HAP-1 (cell line): ENCODE measurements at regions of chr9 and their contacts with region 1.

Region 1: DNA sequence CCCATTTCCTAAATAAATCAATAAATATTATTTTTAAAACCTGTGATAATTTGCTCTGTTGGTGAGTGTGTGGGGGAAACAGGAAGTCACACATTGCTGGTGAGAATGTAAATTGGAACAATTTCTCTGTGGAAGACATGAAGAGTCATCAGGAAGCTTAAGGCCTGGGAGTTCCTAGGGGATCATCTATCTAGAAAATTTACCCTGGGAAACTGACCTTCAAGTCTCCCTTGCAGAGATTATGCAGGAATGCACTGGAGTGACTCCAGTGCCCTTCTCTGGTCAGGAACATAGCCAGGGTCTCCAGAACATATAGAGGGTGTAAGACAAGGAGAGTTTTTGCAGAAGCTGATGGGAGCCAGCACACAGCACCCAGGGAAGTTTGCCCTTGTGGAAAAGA is 13.0 kb upstream of the GCNT1 start:
- DNase-seq: no peak
- H3K4me3 ChIP-seq: no peak overlapping the region
- H3K4me1 ChIP-seq: 0 out of 2 replicates have a peak, but pooled peaks cover 2% of the 10 kb centered on the region
- H3K27me3 ChIP-seq: no peaks in the 10 kb centered on the region

Region 2: GRCh38 chr9:76353280-76353679 is 92.7 kb before region 1 on chr9:
- in situ Hi-C with region 1: no loop called
- DNase-seq: peak; percentile 16 to 29
- H3K4me3 ChIP-seq: no peak overlapping the region
- H3K4me1 ChIP-seq: no peaks in the 10 kb centered on the region
- H3K27me3 ChIP-seq: peaks cover 25% of the 10 kb centered on the region; the same call in 1 of the 2 replicates

Region 3: DNA sequence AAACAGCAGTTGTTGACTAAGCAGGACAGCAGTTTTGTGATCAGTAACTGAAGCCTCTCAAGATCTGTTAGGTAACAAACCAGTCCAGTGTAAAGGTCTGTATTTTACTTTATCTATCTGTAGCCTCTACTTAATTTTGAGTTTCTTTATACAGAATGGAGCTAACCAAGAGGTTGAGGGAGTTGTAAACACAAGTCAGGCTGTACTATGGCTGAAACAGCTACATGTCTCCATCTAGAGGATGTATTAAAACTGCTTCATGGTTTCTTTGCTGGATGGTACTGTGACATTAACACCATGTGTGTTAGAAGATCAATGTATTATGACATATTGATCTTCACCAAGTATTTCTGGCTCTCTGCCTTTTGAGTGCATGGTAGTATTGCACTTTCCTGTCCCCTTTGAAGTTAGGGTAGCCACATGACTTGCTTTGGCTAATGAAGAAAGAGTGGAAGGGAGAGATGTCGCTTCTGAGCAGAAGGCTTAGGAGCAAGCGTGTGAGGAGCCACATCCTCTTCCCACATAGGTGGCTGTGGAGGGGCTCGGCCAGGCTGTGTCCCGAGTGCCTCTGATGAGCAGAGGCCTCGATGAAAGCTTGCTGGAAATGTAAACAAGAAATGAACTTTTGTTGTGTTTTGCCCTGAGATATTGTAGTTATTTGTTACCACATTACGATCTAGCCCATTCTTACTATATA is 212.7 kb after region 1 on chr9:
- in situ Hi-C with region 1: loop called (anchors 5 kb)
- DNase-seq: peak in 1 of 2 experiments; percentile 42
- H3K4me3 ChIP-seq: no peak overlapping the region
- H3K4me1 ChIP-seq: no peaks in the 10 kb centered on the region
- H3K27me3 ChIP-seq: peaks cover 6% of the 10 kb centered on the region

Region 4: GRCh38 chr9:76704593-76705204 is 258.7 kb after region 1 on chr9:
- in situ Hi-C with region 1: loop called (anchors 5 kb)
- DNase-seq: peak; percentile 30 to 78
- H3K4me3 ChIP-seq: no peak overlapping the region
- H3K4me1 ChIP-seq: peaks cover 6% of the 10 kb centered on the region
- H3K27me3 ChIP-seq: peaks cover 18% of the 10 kb centered on the region; the same call in 1 of the 2 replicates